SK-N-SH (cell line): ENCODE measurements at regions of chr15 and their contacts with region 1.

Region 1: DNA sequence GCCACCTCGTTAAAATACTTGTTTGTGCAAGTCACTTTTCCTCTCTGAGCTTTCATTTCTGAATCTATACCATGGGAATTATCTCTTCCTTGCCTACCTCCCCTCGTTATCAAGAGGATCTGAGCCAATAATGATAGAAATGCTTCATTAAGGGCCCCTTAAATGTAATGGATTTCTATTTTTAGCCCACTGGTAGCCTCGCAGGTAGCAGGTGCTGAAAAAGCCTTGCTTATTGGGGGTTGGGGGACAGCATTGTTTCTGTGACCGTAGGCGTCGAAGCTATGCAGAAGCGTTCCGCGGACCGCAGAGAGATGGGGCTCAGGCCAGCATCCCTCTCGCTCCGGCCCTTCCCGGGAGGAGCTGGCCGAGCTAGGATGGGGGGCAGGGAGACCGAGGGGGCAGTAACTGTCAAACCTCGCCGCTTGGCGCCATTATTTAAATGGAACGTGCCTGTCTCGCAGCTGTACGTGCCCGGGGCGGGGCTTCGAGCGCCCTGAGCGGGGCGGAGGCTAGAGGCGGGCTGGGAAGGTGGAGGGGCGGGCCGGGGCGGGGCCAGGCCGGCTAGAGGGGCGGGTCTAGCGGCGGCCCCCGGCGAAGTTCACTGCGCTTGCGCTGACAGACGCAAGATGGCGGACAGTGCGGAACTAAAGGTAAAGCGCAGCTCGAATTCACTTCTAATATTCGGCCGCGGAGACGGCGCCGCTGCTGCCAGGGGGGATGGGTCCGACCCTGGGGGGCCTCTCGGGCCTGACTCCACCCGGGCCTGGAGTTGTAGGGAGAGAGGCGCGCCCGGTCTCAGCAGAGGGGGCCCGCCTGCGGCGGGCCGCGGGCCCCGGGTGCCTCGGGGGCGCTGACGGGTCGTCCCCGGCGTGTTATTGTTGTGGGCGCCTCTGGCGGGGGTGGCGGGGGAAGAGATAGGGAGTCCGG is at the start of gene PIAS1:
- DNase-seq: peak; percentile 99
- H3K4me3 ChIP-seq: peak within 1 kb of the TSS; percentile 84 to 88
- H3K27ac ChIP-seq: peak within 1 kb of the TSS; percentile 77 to 92
- H3K4me1 ChIP-seq: peaks cover 0 to 12% of the 10 kb centered on the region in 2 experiments; a peak in 3 of 4 replicates
- H3K27me3 ChIP-seq: no peaks in the 10 kb centered on the region
- CTCF ChIP-seq: peak; percentile 15; the same call in 1 of the 2 replicates
- EP300 ChIP-seq: peak in 1 of 2 experiments; percentile 44; a peak in 1 of 4 replicates
- RAD21 ChIP-seq: no peak
- polyA plus RNA-seq, gene PIAS1: 9.0 and 9.8 TPM in 2 replicates

Region 2: GRCh38 chr15:68154923-68155559 is 101.1 kb after region 1 on chr15:
- CTCF ChIA-PET with region 1: interaction called, 18 read pairs
- POLR2A ChIA-PET with region 1: no interaction called
- DNase-seq: peak; percentile 39
- H3K4me3 ChIP-seq: no peak overlapping the region; a peak in 1 of 4 replicates
- H3K27ac ChIP-seq: no peak overlapping the region
- H3K4me1 ChIP-seq: peaks cover 0 to 2% of the 10 kb centered on the region in 2 experiments; a peak in 2 of 4 replicates
- H3K27me3 ChIP-seq: no peaks in the 10 kb centered on the region
- CTCF ChIP-seq: peak; percentile 86
- EP300 ChIP-seq: no peak
- RAD21 ChIP-seq: peak; percentile 90